ENCODE measurements at regions of chr10 and their contacts with region 1.

Region 1: DNA sequence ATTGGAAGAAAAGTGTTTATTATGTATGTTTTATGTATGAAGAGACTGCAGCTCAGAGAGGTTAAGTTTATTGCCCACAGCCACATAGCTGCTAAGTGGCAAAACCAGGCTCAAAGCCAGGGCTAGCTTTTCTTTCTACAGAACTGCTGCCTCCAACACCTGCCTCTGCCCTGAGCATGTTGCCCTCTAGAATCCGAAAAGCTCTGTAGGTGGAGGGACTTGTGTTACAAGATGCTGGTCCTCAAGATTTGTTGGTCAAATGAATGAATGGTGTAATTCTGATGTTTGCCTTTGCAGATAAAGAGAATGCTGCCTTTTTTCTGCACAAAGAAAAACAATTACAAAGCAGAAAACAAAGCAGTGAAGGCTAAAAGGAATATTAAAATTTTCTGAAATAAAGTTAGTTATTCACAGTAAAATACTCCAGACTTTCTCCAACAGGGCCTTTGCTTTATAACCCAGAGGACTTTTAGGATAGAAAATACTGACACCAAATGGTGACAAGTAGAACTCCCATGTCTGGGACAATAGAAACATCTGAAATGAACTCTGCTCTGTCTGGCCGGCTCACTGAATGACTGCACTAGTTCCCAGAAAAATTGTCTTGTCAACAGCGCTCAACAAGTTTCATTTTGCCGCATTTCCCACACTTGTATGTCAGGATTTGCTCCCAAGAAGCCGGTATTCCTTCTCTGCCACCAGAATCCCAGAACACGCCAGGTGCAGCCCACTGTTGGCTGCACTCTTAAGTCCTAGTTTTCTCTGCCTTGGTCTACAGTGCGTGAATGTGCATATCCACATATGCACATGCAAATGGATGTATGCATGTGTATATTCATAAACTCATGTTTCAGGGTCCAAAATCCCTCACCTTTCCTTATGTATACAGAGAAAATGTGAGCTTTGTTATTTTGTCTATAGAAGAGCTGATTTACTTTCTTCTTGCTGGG is 11.0 kb upstream of the DNTT start:
- DNase-seq: no peak
- ATAC-seq: peak; percentile 73 to 92

Region 2: DNA sequence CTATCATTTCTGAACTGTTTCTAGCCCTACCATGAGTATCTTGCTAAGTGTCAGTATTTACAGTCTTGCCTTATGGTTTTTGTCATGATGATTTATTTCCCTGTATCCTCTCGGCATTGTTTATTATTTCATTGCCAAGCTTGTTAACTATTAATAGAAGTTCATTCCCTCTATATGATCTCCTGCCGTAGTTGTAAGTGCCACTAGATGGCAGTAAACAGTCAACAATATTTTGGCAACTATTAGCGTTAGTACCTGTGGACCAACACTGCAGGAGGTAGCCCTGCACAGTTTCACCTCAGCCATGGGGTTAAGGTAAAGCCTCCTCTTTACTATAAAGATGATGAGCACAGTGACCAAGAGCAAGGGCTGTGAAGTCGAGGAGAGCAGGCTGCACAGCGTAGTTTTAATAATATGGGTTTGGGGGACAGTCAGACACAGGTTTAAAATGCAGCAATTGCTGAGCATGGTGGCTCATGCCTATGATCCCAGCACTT is 276.0 kb before region 1 on chr10:
- intact Hi-C with region 1: loop called (anchors 5 kb)
- DNase-seq: no peak
- ATAC-seq: peak; percentile 70

Region 3: GRCh38 chr10:96229568-96230030 is 63.6 kb before region 1 on chr10:
- intact Hi-C with region 1: loop called in 1 of 2 experiments (anchors 2 kb)
- DNase-seq: peak; percentile 78
- ATAC-seq: peak; percentile 62 to 64

Region 4: GRCh38 chr10:96257944-96258343 is 35.3 kb before region 1 on chr10:
- intact Hi-C with region 1: no loop called
- DNase-seq: no peak
- ATAC-seq: peak; percentile 80 to 86

Measured in left cardiac atrium (tissue), 4 donors.